Heart left ventricle (tissue), 16 donors: ENCODE measurements at regions of chr19 and their contacts with region 1.

Region 1: DNA sequence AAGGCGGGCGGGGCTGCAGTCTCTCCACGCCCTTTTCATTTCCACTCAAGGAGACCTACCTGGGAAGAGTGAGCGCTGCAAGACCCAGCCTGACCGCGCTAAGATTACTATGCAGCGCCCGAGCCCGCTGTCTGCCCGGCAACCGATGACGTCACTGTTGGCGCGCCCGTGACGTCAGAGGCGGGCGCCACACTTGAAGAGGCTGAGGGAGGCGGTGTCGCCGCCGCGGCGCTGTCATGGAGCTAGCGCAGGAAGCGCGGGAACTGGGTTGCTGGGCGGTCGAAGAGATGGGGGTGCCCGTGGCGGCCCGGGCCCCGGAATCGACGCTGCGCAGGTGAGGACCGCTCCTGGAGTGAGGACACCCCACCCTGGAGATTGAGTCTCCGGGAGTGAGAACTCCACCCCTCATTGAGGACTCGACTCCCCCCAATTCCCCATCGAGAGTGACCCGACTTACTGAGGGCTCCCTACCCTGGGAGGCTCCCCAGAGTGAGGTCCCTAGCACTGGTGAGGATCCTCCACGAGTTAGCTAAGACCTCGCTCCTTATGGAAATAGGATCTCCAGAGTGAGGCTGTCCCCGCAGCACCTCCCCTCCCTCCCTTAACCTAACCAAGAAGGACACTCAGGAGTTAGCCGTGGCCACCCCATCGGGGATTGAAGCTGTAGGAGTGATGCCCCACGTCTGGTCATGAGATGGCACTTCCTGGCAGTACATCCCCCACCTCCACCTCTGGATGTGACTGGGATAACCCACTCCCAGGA is at the start of gene HAUS5:
- DNase-seq: peak; percentile 90 to 96 (median 93)
- ATAC-seq: peak; percentile 95 to 99 (median 98)
- H3K4me3 ChIP-seq: peak within 1 kb of the TSS; percentile 43 to 93 (median 74)
- H3K27ac ChIP-seq: peak within 1 kb of the TSS; percentile 6 to 79 (median 50)
- H3K4me1 ChIP-seq: peaks cover 0 to 22% (median 10%) of the 10 kb centered on the region in 12 donors
- H3K27me3 ChIP-seq: no peaks in the 10 kb centered on the region
- CTCF ChIP-seq: peak in 3 of 12 donors; percentile 8 to 14 (median 13)
- POLR2A ChIP-seq: peak in 1 of 2 donors; percentile 41
- total RNA-seq, gene HAUS5: 1.9 to 9.0 (median 3.9) TPM

Region 2: GRCh38 chr19:35545001-35545911 is 67.5 kb before region 1 on chr19 and contains the start of gene TMEM147:
- intact Hi-C with region 1: loop called in 3 of 10 experiments (anchors 5 to 10 kb)
- DNase-seq: peak; percentile 94 to 97 (median 95)
- ATAC-seq: peak; percentile 96 to 99 (median 98)
- H3K4me3 ChIP-seq: peak within 1 kb of the TSS; percentile 63 to 99 (median 88)
- H3K27ac ChIP-seq: peak within 1 kb of the TSS; percentile 8 to 87 (median 76)
- H3K4me1 ChIP-seq: peaks cover 4 to 30% (median 17%) of the 10 kb centered on the region in 12 donors
- H3K27me3 ChIP-seq: no peaks in the 10 kb centered on the region
- CTCF ChIP-seq: peak in 1 of 12 donors; percentile 11
- POLR2A ChIP-seq: peak in 1 of 2 donors; percentile 76
- total RNA-seq, gene TMEM147: 68.9 to 121 (median 81.6) TPM

Region 3: GRCh38 chr19:35569281-35569781 is 43.4 kb before region 1 on chr19:
- intact Hi-C with region 1: no loop called
- DNase-seq: no peak
- ATAC-seq: no peak
- H3K4me3 ChIP-seq: no peak overlapping the region
- H3K27ac ChIP-seq: no peak overlapping the region
- H3K4me1 ChIP-seq: no peaks in the 10 kb centered on the region
- H3K27me3 ChIP-seq: peaks cover 0 to 7% (median 0%) of the 10 kb centered on the region in 9 donors
- CTCF ChIP-seq: no peak
- POLR2A ChIP-seq: no peak

Region 4: GRCh38 chr19:35628565-35629331 is 16.0 kb after region 1 on chr19 and contains the start of gene RBM42:
- intact Hi-C with region 1: loop called in 2 of 10 experiments (anchors 1 kb)
- DNase-seq: peak; percentile 97 to 98 (median 97)
- ATAC-seq: peak; percentile 100
- H3K4me3 ChIP-seq: peak within 1 kb of the TSS; percentile 75 to 100 (median 95)
- H3K27ac ChIP-seq: peak within 1 kb of the TSS; percentile 75 to 96 (median 92)
- H3K4me1 ChIP-seq: peaks cover 4 to 25% (median 14%) of the 10 kb centered on the region in 12 donors
- H3K27me3 ChIP-seq: no peaks in the 10 kb centered on the region
- CTCF ChIP-seq: no peak
- POLR2A ChIP-seq: peak in 1 of 2 donors; percentile 79
- total RNA-seq, gene RBM42: 47.4 to 70.0 (median 57.5) TPM